Thyroid gland (tissue), 4 donors: ENCODE measurements at regions of chr1 and their contacts with region 1.

Region 1: DNA sequence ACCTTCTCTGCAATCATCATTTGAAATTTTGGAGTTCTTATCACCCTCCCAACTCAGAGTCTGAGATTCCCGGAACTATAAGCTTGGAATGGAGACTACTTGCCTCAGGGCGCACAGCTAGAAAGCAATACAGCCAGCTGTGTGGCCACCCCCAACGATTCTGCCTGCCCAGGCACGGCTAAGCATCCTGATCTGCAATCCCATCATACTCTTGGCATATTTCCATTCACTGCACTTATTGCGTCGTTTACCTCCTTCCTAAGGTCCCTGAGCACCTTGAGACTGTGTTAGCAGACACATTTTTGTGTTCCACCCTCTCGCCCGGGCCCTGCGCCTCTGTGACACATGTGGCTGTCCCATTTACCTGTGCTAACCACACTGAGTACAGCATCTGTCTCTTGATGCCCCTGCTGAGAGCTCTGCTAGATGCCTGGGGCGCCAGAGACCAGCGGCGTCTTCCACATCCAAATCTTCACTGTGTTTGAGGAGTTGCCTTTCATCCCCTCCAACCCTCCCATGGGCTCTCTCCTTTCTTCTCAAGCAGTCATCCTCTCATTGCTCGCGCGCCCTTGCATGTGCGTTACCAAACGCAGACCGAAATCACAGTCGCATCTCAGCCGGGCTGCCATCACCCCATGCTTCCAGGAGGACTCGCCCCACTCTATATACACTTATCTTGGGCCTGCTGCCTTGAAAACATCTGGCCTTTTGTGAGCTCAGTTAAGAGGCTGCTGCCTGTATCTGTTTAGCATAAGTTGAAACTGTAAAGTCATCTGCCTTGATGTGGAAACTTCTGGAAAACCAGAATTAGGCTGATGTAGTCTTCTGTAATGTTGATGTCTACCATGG is 3.5 kb upstream of the CLDN19 start:
- DNase-seq: no peak
- H3K4me3 ChIP-seq: no peak overlapping the region
- H3K27ac ChIP-seq: no peak overlapping the region
- H3K4me1 ChIP-seq: no peaks in the 10 kb centered on the region
- H3K27me3 ChIP-seq: no peaks in the 10 kb centered on the region
- CTCF ChIP-seq: no peak
- POLR2A ChIP-seq: no peak

Region 2: GRCh38 chr1:42348498-42348897 is 395.0 kb before region 1 on chr1:
- intact Hi-C with region 1: no loop called
- DNase-seq: no peak
- H3K4me3 ChIP-seq: no peak overlapping the region
- H3K27ac ChIP-seq: no peak overlapping the region
- H3K4me1 ChIP-seq: no peaks in the 10 kb centered on the region
- H3K27me3 ChIP-seq: no peaks in the 10 kb centered on the region
- CTCF ChIP-seq: no peak
- POLR2A ChIP-seq: no peak

Region 3: GRCh38 chr1:42586016-42586415 is 157.5 kb before region 1 on chr1:
- intact Hi-C with region 1: loop called (anchors 5 kb)
- DNase-seq: no peak
- H3K4me3 ChIP-seq: no peak overlapping the region
- H3K27ac ChIP-seq: no peak overlapping the region
- H3K4me1 ChIP-seq: no peaks in the 10 kb centered on the region
- H3K27me3 ChIP-seq: no peaks in the 10 kb centered on the region
- CTCF ChIP-seq: no peak
- POLR2A ChIP-seq: no peak

Region 4: GRCh38 chr1:42801832-42802473 is 58.4 kb after region 1 on chr1:
- intact Hi-C with region 1: no loop called
- DNase-seq: no peak
- H3K4me3 ChIP-seq: no peak overlapping the region
- H3K27ac ChIP-seq: no peak overlapping the region
- H3K4me1 ChIP-seq: no peaks in the 10 kb centered on the region
- H3K27me3 ChIP-seq: no peaks in the 10 kb centered on the region
- CTCF ChIP-seq: no peak
- POLR2A ChIP-seq: no peak